ENCODE measurements at regions of chr19 and their contacts with region 1.

Region 1: DNA sequence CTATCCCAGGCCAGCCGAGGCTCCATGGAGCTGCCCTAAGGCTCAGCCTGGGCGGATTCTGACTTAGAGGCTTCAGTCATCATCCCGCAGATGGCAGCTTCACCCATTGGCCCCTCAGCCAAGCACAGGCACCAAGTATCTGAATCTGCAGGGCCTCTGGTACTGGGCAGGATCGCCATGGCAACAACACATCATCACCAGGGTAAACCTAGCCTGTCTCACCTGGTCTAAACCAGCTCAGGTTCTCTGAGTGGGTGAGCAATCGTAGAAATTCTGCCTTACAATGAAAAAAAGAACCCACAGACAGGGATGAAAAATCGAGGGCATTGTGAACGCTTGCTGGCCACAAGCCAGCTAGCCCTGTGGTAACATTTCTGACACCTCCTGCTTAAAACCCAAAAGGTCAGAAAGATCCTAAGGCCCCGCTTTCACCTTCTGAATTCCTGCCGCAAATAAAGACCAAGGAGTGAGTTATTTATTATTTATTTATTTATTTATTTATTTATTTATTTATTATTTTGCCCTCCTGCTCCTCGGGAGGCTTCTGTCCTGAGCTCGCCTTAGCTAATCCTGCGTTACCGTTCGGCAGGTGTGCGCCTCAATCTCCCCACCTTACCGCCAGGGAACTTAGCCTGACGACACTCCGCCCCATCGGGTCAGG is 12.0 kb upstream of the CEACAM21 start:
- DNase-seq: no peak
- H3K4me3 ChIP-seq: peak overlapping the region in 1 of 3 experiments; percentile 20
- H3K4me3 Mint-ChIP-seq: peak overlapping the region; percentile 63 to 88
- H3K27ac ChIP-seq: no peak overlapping the region
- H3K27ac Mint-ChIP-seq: no peak overlapping the region
- H3K4me1 ChIP-seq: peaks cover 20 to 22% of the 10 kb centered on the region in 2 donors
- H3K4me1 Mint-ChIP-seq: peaks cover 29% of the 10 kb centered on the region
- H3K27me3 ChIP-seq: peaks cover 25 to 42% of the 10 kb centered on the region in 2 donors
- H3K27me3 Mint-ChIP-seq: peaks cover 37 to 42% (median 38%) of the 10 kb centered on the region in 3 donors
- CTCF ChIP-seq: no peak

Region 2: DNA sequence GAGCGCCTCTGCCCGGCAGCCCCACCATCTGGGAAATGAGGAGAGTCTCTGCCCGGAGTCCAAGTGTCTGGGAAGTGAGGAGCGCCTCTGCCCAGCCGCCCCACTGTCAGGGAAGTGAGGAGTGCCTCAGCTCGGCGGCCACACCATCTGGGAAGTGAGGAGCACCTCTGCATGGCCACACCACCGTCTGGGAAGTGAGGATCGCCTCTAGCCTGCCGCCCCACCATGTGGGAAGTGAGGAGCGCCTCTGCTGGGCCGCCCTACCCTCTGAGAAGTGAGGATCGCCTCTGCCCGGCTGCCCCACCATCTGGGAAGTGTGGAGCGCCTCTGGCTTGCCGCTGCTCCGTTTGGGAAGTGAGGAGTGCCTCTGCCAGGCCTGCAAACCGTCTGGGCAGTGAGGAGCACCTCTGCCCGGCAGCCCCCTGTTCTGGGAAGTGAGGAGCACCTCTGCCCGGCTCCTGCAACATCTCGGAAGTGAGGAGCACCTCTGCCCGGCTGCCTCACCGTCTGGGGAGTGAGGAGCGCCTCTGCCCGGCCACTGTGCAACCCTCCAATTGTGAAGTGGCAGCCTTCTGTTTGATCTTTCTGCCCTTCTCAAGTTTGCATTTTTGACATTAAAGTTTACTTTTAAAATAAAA is 48.9 kb before region 1 on chr19:
- intact Hi-C with region 1: loop called (anchors 5 to 10 kb)
- DNase-seq: no peak
- H3K4me3 ChIP-seq: no peak overlapping the region
- H3K4me3 Mint-ChIP-seq: no peak overlapping the region
- H3K27ac ChIP-seq: no peak overlapping the region
- H3K27ac Mint-ChIP-seq: peak overlapping the region in 1 of 7 donors; percentile 3
- H3K4me1 ChIP-seq: peaks cover 14 to 15% of the 10 kb centered on the region in 2 donors
- H3K4me1 Mint-ChIP-seq: peaks cover 14% of the 10 kb centered on the region
- H3K27me3 ChIP-seq: peaks cover 7 to 11% of the 10 kb centered on the region in 2 donors
- H3K27me3 Mint-ChIP-seq: peaks cover 2 to 9% (median 7%) of the 10 kb centered on the region in 3 donors
- CTCF ChIP-seq: no peak

Region 3: GRCh38 chr19:41531438-41532311 is 32.3 kb before region 1 on chr19:
- intact Hi-C with region 1: no loop called
- DNase-seq: peak; percentile 97 to 99 (median 98)
- H3K4me3 ChIP-seq: peak overlapping the region in 2 of 3 experiments; percentile 43 to 64
- H3K4me3 Mint-ChIP-seq: peak overlapping the region; percentile 54 to 86
- H3K27ac ChIP-seq: peak overlapping the region; percentile 69 to 92
- H3K27ac Mint-ChIP-seq: peak overlapping the region; percentile 97 to 99 (median 99)
- H3K4me1 ChIP-seq: peaks cover 64 to 79% of the 10 kb centered on the region in 2 donors
- H3K4me1 Mint-ChIP-seq: peaks cover 66% of the 10 kb centered on the region
- H3K27me3 ChIP-seq: no peaks in the 10 kb centered on the region
- H3K27me3 Mint-ChIP-seq: peaks cover 0 to 6% (median 4%) of the 10 kb centered on the region in 3 donors
- CTCF ChIP-seq: no peak

Region 4: DNA sequence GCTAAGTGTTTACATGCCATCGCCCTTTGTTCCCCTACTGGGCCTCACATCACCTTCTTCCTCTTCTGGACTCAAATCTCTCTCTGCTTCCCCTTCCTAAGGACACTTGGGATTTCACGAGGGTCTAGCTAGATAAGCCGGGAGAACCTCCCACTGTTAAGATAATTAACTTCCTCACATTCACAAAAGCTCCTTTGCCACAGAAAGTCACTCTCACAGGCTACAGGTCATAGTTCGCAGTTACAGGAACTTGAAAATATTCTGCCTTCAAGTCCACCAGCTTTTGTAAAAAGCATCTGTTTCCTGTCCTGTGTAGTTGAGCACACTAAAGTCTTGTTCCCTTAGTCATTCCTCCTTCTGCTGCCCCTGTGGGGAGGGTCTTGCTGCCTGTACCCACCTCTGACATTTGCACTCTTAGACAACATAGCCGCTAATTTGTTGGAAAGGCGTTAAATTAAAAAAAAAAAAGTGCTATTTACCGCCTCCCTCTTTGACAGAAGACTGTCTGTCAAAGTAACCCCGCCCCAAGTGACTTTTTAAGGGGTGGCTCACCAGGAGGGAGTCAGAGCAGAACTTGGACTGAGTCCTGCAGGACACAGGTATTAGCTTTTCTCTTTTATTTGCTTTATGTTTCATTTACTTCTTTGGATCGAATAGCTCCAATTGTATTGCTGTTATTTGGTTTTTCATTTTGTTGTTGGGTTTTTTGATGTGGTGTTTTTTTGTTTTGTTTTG is 14.9 kb before region 1 on chr19:
- intact Hi-C with region 1: loop called in 1 of 2 experiments (anchors 2 kb)
- DNase-seq: peak; percentile 44 to 64 (median 58)
- H3K4me3 ChIP-seq: peak overlapping the region; percentile 5 to 53 (median 29)
- H3K4me3 Mint-ChIP-seq: peak overlapping the region; percentile 76 to 89
- H3K27ac ChIP-seq: peak overlapping the region; percentile 54 to 76
- H3K27ac Mint-ChIP-seq: peak overlapping the region; percentile 84 to 96 (median 92)
- H3K4me1 ChIP-seq: peaks cover 80 to 95% of the 10 kb centered on the region in 2 donors
- H3K4me1 Mint-ChIP-seq: peaks cover 82% of the 10 kb centered on the region
- H3K27me3 ChIP-seq: no peaks in the 10 kb centered on the region
- H3K27me3 Mint-ChIP-seq: peaks cover 0 to 2% (median 0%) of the 10 kb centered on the region in 3 donors
- CTCF ChIP-seq: no peak

Region 5: DNA sequence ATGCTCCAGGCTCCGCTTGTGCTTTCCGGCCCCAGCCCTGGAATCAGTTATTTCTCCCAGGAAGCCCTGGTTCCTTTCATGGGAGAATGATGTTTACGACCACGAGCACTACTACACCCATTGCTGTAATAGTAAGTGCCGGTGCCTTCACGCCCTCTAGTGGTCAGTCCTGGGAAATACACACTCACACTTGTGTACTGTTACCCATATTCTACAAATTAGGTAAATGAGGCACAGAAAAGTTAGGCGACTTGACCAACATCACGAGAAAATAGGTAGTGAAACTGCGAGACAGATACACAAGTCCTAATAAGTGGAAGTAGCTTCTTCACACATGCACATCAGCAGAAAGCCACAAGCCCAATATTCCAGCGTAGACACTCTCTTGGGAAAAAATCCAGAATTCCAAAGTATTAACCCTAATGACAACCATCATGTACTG is 33.6 kb after region 1 on chr19:
- intact Hi-C with region 1: no loop called
- DNase-seq: peak; percentile 78 to 89 (median 87)
- H3K4me3 ChIP-seq: no peak overlapping the region
- H3K4me3 Mint-ChIP-seq: peak overlapping the region in 1 of 2 donors; percentile 51
- H3K27ac ChIP-seq: no peak overlapping the region
- H3K27ac Mint-ChIP-seq: peak overlapping the region in 1 of 7 donors; percentile 73
- H3K4me1 ChIP-seq: peaks cover 16 to 18% of the 10 kb centered on the region in 2 donors
- H3K4me1 Mint-ChIP-seq: peaks cover 26% of the 10 kb centered on the region
- H3K27me3 ChIP-seq: no peaks in the 10 kb centered on the region
- H3K27me3 Mint-ChIP-seq: peaks cover 9 to 12% (median 11%) of the 10 kb centered on the region in 3 donors
- CTCF ChIP-seq: peak; percentile 94

Region 6: GRCh38 chr19:41671491-41671890 is 107.5 kb after region 1 on chr19:
- intact Hi-C with region 1: no loop called
- DNase-seq: no peak
- H3K4me3 ChIP-seq: no peak overlapping the region
- H3K4me3 Mint-ChIP-seq: peak overlapping the region in 1 of 2 donors; percentile 9
- H3K27ac ChIP-seq: no peak overlapping the region
- H3K27ac Mint-ChIP-seq: no peak overlapping the region
- H3K4me1 ChIP-seq: no peaks in the 10 kb centered on the region
- H3K4me1 Mint-ChIP-seq: no peaks in the 10 kb centered on the region
- H3K27me3 ChIP-seq: peaks cover 29 to 44% of the 10 kb centered on the region in 2 donors
- H3K27me3 Mint-ChIP-seq: peaks cover 12 to 51% (median 15%) of the 10 kb centered on the region in 3 donors
- CTCF ChIP-seq: no peak